ENCODE measurements at regions of chr12 and their contacts with region 1.

Region 1: DNA sequence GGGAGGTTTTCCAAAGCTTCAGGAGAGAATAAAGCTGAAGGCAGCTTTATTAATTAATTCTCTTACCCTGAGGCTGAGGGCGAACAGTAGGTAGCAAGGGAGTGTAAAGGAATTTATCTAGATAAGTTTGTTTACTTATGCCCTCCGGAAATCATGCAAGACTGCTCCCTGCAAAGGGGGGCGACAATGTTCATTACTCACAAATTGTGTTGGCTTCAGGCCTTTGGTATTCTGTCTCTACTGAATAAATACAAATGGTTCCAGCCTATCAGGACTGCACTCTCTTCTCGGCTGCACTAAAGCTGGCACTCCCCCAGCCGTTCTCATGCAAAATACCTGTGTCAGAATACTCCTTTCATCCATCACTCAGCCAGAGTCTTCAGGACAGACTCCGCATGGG is 120.8 kb downstream of the PPHLN1 start:
- DNase-seq: peak; percentile 77
- H3K4me3 ChIP-seq: no peak overlapping the region
- H3K27ac ChIP-seq: peak overlapping the region; percentile 39
- H3K4me1 ChIP-seq: peaks cover 35% of the 10 kb centered on the region
- H3K27me3 ChIP-seq: no peaks in the 10 kb centered on the region
- CTCF ChIP-seq: no peak
- POLR2A ChIP-seq: peak; percentile 27

Region 2: GRCh38 chr12:42396473-42397259 is 50.1 kb before region 1 on chr12:
- CTCF ChIA-PET with region 1: no interaction called
- POLR2A ChIA-PET with region 1: no interaction called
- dilution Hi-C with region 1: no loop called
- intact Hi-C with region 1: loop called (anchors 2 kb)
- DNase-seq: peak; percentile 77
- H3K4me3 ChIP-seq: no peak overlapping the region
- H3K27ac ChIP-seq: no peak overlapping the region
- H3K4me1 ChIP-seq: peaks cover 5% of the 10 kb centered on the region
- H3K27me3 ChIP-seq: no peaks in the 10 kb centered on the region
- CTCF ChIP-seq: no peak
- POLR2A ChIP-seq: no peak

Region 3: DNA sequence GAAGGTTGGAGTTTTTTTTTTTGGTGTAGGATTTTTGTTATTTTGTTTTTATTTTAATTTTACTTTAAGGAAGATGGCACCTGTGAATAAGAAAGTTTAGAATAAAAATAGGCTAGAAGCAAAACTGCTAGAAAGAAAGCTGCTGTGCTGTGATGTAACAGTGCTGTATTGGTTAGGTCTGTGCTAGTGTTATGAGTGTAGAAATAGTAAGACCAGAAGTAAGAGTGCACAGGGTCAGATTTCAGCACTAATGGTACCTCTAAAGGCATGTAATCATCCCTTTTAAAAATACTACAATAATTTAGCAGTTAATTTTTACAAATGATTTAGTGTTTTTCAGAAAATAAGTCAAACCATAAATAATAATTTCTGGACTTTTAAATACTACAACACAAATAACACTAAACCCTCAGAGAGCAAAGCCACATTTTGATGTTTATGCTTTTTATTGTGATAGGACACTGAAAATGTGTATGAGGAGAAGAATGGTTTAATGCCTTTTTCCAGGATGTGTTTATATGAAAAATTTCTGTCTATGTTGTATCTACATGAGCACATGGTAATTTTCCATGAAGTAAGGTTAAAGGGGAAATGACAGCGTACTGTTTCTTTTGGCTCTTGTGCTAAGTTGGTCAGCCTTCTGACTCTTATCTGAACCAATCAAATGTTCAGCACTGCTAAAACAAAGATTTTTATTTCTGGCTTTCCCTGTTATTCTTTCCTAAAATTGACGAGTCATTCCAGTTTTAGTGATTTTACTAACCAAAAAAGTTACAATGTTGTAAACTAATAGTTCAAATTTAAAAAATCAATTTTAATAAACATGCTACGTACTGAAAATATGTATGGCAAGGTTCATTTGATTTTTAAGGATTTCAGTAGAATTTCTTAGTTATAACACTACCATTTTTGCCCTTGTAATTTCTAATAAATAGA is 24.6 kb before region 1 on chr12:
- CTCF ChIA-PET with region 1: interaction called, 4 read pairs
- POLR2A ChIA-PET with region 1: no interaction called
- dilution Hi-C with region 1: no loop called
- intact Hi-C with region 1: loop called (anchors 1 kb)
- DNase-seq: peak; percentile 96
- H3K4me3 ChIP-seq: no peak overlapping the region
- H3K27ac ChIP-seq: peak overlapping the region; percentile 93
- H3K4me1 ChIP-seq: peaks cover 53% of the 10 kb centered on the region
- H3K27me3 ChIP-seq: no peaks in the 10 kb centered on the region
- CTCF ChIP-seq: no peak
- POLR2A ChIP-seq: no peak

Measured in endothelial cell of umbilical vein (primary cell).